T-cell (primary cell): ENCODE measurements at regions of chr17 and their contacts with region 1.

Region 1: DNA sequence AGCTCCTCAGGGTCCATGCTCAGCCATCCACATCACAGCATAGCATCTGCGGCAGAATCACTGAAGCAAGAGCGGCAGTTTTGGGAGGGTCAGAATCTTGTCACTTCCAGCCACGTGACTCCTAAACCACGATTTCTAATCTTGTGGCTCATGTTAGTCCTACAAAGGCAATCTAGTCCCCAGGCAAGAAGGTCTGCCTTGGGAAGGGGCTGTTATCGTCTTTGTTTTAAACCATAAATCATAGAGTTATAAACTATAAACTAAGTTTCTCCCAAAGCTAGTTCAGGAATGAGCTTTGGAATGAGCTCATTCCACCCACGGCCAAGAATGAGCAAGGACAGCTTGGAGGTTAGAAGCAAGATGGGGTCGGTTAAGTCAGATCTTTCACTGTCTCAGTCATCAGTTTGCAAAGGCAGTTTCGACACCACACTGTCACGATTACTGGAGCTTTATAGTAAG is 20.8 kb upstream of the DNAH17 start:
- DNase-seq: no peak
- ATAC-seq: no peak
- H3K4me3 ChIP-seq: no peak overlapping the region
- H3K4me3 Mint-ChIP-seq: no peak overlapping the region
- H3K27ac ChIP-seq: no peak overlapping the region
- H3K27ac Mint-ChIP-seq: no peak overlapping the region
- H3K4me1 ChIP-seq: no peaks in the 10 kb centered on the region
- H3K4me1 Mint-ChIP-seq: no peaks in the 10 kb centered on the region
- H3K27me3 ChIP-seq: peaks cover 0 to 30% of the 10 kb centered on the region in 2 experiments
- H3K27me3 Mint-ChIP-seq: peaks cover 0 to 6% of the 10 kb centered on the region in 2 donors

Region 2: DNA sequence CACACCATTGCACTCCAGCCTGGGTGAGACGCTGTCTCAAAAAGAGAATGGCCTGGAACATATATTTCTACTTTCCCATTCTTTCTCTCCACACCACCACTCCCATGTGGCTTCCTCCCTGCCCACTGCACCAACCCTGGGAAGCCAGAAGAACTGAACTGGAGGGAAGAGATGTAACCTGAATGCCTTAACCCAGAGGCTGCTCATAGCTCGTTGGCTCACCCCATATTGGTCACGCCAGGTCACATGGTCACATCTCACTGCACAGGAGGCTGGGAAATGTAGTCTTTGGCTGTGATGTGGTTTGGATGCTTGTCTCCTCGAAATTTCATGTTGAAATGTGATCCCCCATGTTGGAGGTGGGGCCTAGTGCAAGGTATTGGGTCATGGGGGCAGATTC is 15.0 kb before region 1 on chr17:
- CTCF ChIA-PET with region 1: no interaction called
- POLR2A ChIA-PET with region 1: interaction called in 1 of 2 experiments, 14 read pairs
- DNase-seq: peak in 1 of 35 experiments; percentile 11
- ATAC-seq: no peak
- H3K4me3 ChIP-seq: no peak overlapping the region
- H3K4me3 Mint-ChIP-seq: no peak overlapping the region
- H3K27ac ChIP-seq: no peak overlapping the region
- H3K27ac Mint-ChIP-seq: no peak overlapping the region
- H3K4me1 ChIP-seq: no peaks in the 10 kb centered on the region
- H3K4me1 Mint-ChIP-seq: no peaks in the 10 kb centered on the region
- H3K27me3 ChIP-seq: peaks cover 0 to 13% of the 10 kb centered on the region in 2 experiments
- H3K27me3 Mint-ChIP-seq: peaks cover 0 to 12% of the 10 kb centered on the region in 2 donors

Region 3: DNA sequence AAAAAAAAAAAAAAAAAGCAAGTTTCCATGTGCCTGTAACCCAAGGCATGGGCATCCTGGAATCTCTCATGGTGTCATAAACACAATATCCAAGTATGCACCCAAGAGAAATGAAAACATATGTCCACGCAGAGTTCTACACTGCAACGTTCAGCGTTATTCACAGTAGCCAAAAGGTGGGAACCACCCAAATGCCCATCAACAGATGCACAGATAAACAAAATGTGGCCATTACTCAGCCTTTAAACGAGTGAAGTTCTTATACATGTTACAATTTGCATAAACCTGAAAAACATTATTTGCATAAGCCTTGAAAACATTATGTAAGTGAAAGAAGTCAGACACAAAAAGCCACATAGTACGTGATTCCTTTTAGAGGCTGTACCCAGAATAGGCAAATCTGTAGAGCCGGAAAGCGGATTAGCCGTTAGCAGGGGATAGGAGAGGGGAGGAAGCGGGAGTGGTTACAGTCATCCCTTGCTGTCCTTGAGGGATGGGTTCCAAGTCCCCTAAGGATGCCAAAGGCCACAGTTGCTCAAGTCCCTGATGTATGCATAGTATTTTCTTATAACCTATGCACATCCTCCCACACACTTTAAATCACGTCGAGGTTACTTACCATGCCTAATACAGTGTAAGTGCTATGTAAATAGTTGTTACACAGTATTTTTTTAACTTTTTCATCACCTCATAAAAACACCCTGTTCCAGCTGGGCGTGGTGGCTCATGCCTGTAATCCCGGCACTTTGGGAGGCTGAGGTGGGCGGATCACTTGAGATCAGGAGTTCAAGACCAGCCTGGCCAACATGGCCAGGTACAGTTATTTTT is 26.5 kb after region 1 on chr17:
- CTCF ChIA-PET with region 1: no interaction called
- POLR2A ChIA-PET with region 1: no interaction called
- DNase-seq: no peak
- ATAC-seq: no peak
- H3K4me3 ChIP-seq: no peak overlapping the region
- H3K4me3 Mint-ChIP-seq: no peak overlapping the region
- H3K27ac ChIP-seq: no peak overlapping the region
- H3K27ac Mint-ChIP-seq: no peak overlapping the region
- H3K4me1 ChIP-seq: peaks cover 0 to 4% of the 10 kb centered on the region in 2 experiments
- H3K4me1 Mint-ChIP-seq: no peaks in the 10 kb centered on the region
- H3K27me3 ChIP-seq: peaks cover 0 to 11% of the 10 kb centered on the region in 2 experiments
- H3K27me3 Mint-ChIP-seq: no peaks in the 10 kb centered on the region

Region 4: GRCh38 chr17:78759203-78759968 is 161.3 kb after region 1 on chr17:
- CTCF ChIA-PET with region 1: no interaction called
- POLR2A ChIA-PET with region 1: interaction called in 1 of 2 experiments, 11 read pairs
- DNase-seq: peak; percentile 57 to 94 (median 89)
- ATAC-seq: peak; percentile 89 to 95 (median 93)
- H3K4me3 ChIP-seq: peak overlapping the region; percentile 16 to 39
- H3K4me3 Mint-ChIP-seq: peak overlapping the region; percentile 60 to 70 (median 66)
- H3K27ac ChIP-seq: peak overlapping the region; percentile 95
- H3K27ac Mint-ChIP-seq: peak overlapping the region; percentile 92 to 94
- H3K4me1 ChIP-seq: peaks cover 56 to 85% of the 10 kb centered on the region in 2 experiments
- H3K4me1 Mint-ChIP-seq: peaks cover 83 to 89% (median 84%) of the 10 kb centered on the region in 3 donors
- H3K27me3 ChIP-seq: no peaks in the 10 kb centered on the region
- H3K27me3 Mint-ChIP-seq: no peaks in the 10 kb centered on the region